WTC11 (cell line): ENCODE measurements at regions of chr19 and their contacts with region 1.

Region 1: DNA sequence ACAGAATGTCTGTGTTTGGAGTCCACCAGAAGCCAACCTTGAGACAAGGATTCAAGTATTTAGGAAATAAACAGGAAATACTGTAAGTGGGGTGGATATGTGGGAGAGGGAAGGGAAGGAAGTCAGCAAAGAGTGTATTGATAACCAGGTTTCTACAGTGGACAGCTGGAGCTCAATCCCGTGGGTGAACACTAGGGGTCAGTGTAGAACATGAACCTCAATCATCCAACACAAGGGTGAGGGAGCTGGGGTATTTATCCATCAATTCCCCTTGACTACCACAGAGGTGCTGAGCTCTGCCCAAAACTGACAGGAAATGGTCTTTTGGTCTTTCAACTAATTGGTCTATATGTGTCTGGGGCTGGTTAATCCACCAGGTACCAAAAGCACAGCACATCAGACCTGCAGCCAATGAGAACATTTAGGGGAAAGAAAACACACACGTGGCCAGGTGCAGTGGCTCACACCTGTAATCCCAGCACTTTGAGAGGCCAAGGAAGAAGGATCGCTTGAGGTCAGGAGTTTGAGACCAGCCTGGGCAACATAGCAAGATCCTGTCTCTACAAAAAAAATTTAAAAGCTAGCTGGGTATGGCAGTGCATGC is 5.6 kb upstream of the SYDE1 start:
- DNase-seq: peak; percentile 84
- ATAC-seq: peak; percentile 93
- H3K4me3 Mint-ChIP-seq: no peak overlapping the region
- H3K27ac Mint-ChIP-seq: no peak overlapping the region
- H3K4me1 Mint-ChIP-seq: peaks cover 2% of the 10 kb centered on the region
- H3K27me3 Mint-ChIP-seq: peaks cover 8% of the 10 kb centered on the region; the same call in 1 of the 2 replicates
- CTCF ChIP-seq: peak; percentile 67

Region 2: GRCh38 chr19:14977122-14977521 is 124.5 kb before region 1 on chr19:
- CTCF ChIA-PET with region 1: no interaction called
- POLR2A ChIA-PET with region 1: no interaction called
- DNase-seq: no peak
- ATAC-seq: no peak
- H3K4me3 Mint-ChIP-seq: no peak overlapping the region
- H3K27ac Mint-ChIP-seq: no peak overlapping the region
- H3K4me1 Mint-ChIP-seq: peaks cover 15% of the 10 kb centered on the region
- H3K27me3 Mint-ChIP-seq: peaks cover 31% of the 10 kb centered on the region
- CTCF ChIP-seq: no peak

Region 3: DNA sequence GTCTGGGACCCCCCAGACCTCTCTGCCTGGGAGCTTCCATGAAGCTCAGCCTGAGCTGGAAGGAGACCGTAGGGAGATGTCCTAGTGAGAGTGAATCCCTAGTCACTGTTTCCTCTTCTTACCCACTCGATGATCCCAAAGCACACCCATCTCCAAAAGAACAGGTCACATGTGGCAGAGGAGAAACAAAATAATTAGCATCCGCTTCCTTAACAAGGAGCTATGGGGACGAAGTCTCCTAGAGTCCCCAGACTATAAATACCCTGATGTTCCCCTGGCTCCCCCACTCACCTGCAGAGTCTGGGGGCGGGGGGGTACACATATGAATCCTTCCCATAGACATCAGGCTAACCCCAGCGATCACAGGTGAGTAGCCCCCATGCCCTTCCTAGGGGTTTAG is 19.7 kb before region 1 on chr19 and contains the start of gene OR1I1:
- CTCF ChIA-PET with region 1: interaction called, 18 read pairs
- POLR2A ChIA-PET with region 1: interaction called, 6 read pairs
- DNase-seq: no peak
- ATAC-seq: no peak
- H3K4me3 Mint-ChIP-seq: no peak within 1 kb of the TSS
- H3K27ac Mint-ChIP-seq: no peak within 1 kb of the TSS
- H3K4me1 Mint-ChIP-seq: no peaks in the 10 kb centered on the region
- H3K27me3 Mint-ChIP-seq: peaks cover 13% of the 10 kb centered on the region
- CTCF ChIP-seq: no peak
- total RNA-seq, gene OR1I1: not detected in 3 replicates

Region 4: GRCh38 chr19:15125232-15126067 is 23.9 kb after region 1 on chr19:
- CTCF ChIA-PET with region 1: interaction called, 59 read pairs
- POLR2A ChIA-PET with region 1: no interaction called
- DNase-seq: peak; percentile 98
- ATAC-seq: peak; percentile 95
- H3K4me3 Mint-ChIP-seq: peak overlapping the region; percentile 99
- H3K27ac Mint-ChIP-seq: peak overlapping the region; percentile 100
- H3K4me1 Mint-ChIP-seq: peaks cover 5% of the 10 kb centered on the region; the same call in 1 of the 2 replicates
- H3K27me3 Mint-ChIP-seq: no peaks in the 10 kb centered on the region; the same call in 1 of the 2 replicates
- CTCF ChIP-seq: no peak

Region 5: GRCh38 chr19:15195371-15196334 is 94.1 kb after region 1 on chr19:
- CTCF ChIA-PET with region 1: interaction called, 14 read pairs
- POLR2A ChIA-PET with region 1: no interaction called
- DNase-seq: peak; percentile 97
- ATAC-seq: peak; percentile 58
- H3K4me3 Mint-ChIP-seq: peak overlapping the region; percentile 77
- H3K27ac Mint-ChIP-seq: 0 out of 2 replicates have a peak overlapping the region, but pooled peaks have one; percentile 70
- H3K4me1 Mint-ChIP-seq: peaks cover 31% of the 10 kb centered on the region
- H3K27me3 Mint-ChIP-seq: no peaks in the 10 kb centered on the region
- CTCF ChIP-seq: no peak

Region 6: DNA sequence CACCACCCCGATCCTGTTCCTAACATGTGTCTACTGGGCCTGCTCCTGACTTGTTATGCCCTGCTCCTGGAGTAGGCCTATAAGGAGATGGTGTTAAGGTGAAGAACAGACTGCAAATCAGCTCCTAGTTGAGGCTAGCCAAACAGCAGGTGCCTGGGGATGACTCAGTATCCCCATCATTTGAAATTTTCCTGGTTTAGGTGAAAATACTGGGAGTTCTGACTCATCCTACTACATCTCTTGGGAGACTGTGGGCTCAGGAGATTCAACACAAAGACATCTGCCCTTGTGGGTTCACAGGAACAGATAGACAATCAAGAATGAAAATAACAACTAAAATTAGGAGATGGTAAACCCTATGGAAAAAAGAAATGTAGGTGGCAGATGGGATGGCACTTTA is 189.5 kb after region 1 on chr19:
- CTCF ChIA-PET with region 1: no interaction called
- POLR2A ChIA-PET with region 1: no interaction called
- DNase-seq: no peak
- ATAC-seq: no peak
- H3K4me3 Mint-ChIP-seq: no peak overlapping the region
- H3K27ac Mint-ChIP-seq: peak overlapping the region; percentile 78
- H3K4me1 Mint-ChIP-seq: peaks cover 90% of the 10 kb centered on the region
- H3K27me3 Mint-ChIP-seq: no peaks in the 10 kb centered on the region
- CTCF ChIP-seq: no peak

Region 7: GRCh38 chr19:15418588-15419412 is 317.2 kb after region 1 on chr19 and contains the start of gene AKAP8L:
- CTCF ChIA-PET with region 1: interaction called, 19 read pairs
- POLR2A ChIA-PET with region 1: interaction called, 4 read pairs
- DNase-seq: peak; percentile 99
- ATAC-seq: peak; percentile 97
- H3K4me3 Mint-ChIP-seq: peak within 1 kb of the TSS; percentile 95
- H3K27ac Mint-ChIP-seq: peak within 1 kb of the TSS; percentile 94
- H3K4me1 Mint-ChIP-seq: peaks cover 14% of the 10 kb centered on the region
- H3K27me3 Mint-ChIP-seq: no peaks in the 10 kb centered on the region
- CTCF ChIP-seq: no peak
- total RNA-seq, gene AKAP8L: 184 to 231 TPM (median 184 TPM) in 3 replicates